Sciatic nerve (tissue), 2 donors: ENCODE measurements at regions of chr11 and their contacts with region 1.

Region 1: DNA sequence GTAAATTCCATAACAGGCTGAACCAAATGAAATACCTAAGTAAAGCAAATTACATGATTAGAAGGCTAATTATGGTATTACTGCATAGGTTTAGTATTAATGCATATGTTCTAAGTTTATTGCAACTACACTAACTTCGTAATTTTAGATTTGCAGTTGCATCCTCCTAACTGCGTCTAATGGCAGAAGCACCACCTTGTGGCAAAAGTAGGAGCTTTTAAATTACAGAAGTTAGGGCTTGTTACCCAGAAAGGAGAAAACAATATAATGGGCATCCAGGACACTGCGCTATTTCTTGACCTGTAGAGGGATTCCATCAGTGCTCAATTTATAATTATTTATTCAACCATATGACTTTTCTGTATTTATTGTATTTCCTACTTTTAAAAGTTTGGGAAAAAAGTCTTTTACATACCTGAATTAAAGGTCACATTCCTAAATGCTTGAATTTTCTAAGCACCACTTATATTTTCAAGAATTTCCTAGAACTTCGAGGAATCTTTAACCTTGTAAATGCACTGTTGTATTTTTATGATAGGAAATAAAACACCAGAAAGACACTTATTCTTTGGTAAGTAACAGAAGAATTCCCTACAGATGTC is 16.3 kb upstream of the GPR83 start:
- DNase-seq: no peak
- ATAC-seq: peak; percentile 79

Region 2: GRCh38 chr11:94066901-94067429 is 350.5 kb before region 1 on chr11:
- intact Hi-C with region 1: no loop called
- DNase-seq: no peak
- ATAC-seq: no peak

Region 3: GRCh38 chr11:94181943-94182342 is 235.5 kb before region 1 on chr11:
- intact Hi-C with region 1: loop called (anchors 2 kb)
- DNase-seq: no peak
- ATAC-seq: no peak

Region 4: DNA sequence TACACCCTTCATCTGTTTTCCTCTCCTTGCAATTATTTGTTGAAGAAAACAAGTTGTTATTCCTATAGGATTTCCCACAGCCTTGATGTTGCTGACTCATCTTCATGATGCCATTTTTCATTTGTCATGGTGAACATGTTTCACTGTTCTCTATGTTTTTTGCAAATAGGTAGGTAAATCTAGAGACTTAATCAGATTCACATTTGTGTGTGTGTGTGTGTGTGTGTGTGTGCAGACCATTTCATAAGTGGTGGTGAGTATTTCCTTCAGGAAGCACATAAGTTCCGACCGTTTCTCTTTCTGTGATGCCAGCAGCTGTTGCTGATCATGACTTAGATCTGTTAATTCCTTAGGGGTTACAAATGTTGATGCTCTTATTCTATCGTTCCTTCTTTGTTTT is 193.4 kb before region 1 on chr11:
- intact Hi-C with region 1: no loop called
- DNase-seq: no peak
- ATAC-seq: no peak

Region 5: DNA sequence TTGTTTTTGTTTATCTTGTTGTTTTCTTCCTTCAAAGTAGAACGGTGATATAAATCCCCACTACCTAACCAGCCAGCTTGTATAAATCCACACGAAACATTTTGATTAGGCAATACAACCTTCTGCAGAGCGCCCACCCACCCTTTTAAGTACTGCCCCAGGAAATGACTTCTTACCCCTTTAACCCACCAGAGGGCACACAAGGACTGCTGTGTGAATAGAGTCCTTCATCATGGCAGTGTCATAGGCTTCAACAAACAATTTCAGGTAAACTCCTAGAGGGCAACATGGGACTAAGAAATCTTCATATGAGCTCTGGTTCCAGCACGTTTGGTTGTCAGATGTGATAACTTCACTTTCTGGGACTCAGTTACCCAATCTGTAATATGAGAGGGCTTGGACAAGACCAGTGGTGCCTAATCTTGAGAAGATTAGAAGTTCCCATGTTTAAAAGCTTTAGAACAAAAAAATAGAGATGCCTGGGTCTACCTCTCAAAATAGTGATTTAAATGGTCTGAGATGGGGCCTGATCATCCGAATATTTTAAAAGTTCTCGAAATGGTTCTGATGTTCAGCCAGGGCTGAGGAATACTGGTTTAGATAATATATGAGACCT is 205.7 kb after region 1 on chr11:
- intact Hi-C with region 1: no loop called
- DNase-seq: peak; percentile 63
- ATAC-seq: peak; percentile 95